PC-9 (cell line): ENCODE measurements at regions of chr11 and their contacts with region 1.

Region 1: GRCh38 chr11:122853971-122854446 is 15.7 kb downstream of the CRTAM start:
- DNase-seq: peak; percentile 45 to 69
- H3K4me3 ChIP-seq: no peak overlapping the region
- H3K27ac ChIP-seq: peak overlapping the region; percentile 100
- H3K4me1 ChIP-seq: peaks cover 57% of the 10 kb centered on the region
- H3K27me3 ChIP-seq: no peaks in the 10 kb centered on the region
- CTCF ChIP-seq: peak; percentile 90

Region 2: GRCh38 chr11:121591405-121592033 is 1262.5 kb before region 1 on chr11:
- CTCF ChIA-PET with region 1: no interaction called
- POLR2A ChIA-PET with region 1: no interaction called
- intact Hi-C with region 1: loop called (anchors 5 kb)
- DNase-seq: peak in 1 of 2 experiments; percentile 61
- H3K4me3 ChIP-seq: no peak overlapping the region
- H3K27ac ChIP-seq: no peak overlapping the region
- H3K4me1 ChIP-seq: peaks cover 9% of the 10 kb centered on the region
- H3K27me3 ChIP-seq: peaks cover 42% of the 10 kb centered on the region; the same call in 1 of the 2 replicates
- CTCF ChIP-seq: peak; percentile 93

Region 3: DNA sequence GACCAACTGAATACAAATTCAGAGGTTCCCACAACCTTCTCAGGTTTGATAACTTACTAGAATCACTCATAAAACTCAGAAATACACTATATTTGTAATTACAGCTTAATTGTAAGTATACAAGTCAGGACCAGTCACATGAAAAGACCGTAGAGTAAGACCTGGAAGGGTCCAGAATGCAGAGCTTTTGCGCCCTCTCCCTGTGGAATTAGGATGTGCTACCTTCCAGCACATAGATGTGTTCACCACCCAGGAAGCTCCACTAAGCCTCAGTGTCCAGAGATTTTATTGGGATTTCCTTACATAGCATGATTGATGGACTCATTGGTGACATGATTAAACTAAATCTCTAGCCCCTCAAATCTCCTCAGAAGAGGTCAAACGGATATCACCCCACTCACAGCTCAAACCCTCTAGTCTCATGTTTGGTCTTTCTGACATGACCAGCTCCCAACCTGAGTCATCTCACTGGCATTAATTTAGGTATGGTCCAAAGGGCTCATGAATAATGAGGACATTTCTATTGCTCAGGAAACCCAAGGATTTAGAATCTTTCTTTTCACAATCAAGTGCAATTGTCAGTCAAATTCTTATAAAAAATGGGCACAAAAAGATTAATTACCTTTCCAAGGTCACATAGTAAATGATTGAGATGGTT is 275.7 kb before region 1 on chr11:
- CTCF ChIA-PET with region 1: interaction called, 4 read pairs
- POLR2A ChIA-PET with region 1: no interaction called
- intact Hi-C with region 1: loop called (anchors 1 kb)
- DNase-seq: no peak
- H3K4me3 ChIP-seq: no peak overlapping the region
- H3K27ac ChIP-seq: no peak overlapping the region
- H3K4me1 ChIP-seq: peaks cover 11% of the 10 kb centered on the region
- H3K27me3 ChIP-seq: no peaks in the 10 kb centered on the region
- CTCF ChIP-seq: no peak

Region 4: GRCh38 chr11:122781378-122782195 is 72.4 kb before region 1 on chr11:
- CTCF ChIA-PET with region 1: interaction called, 3 read pairs
- POLR2A ChIA-PET with region 1: no interaction called
- intact Hi-C with region 1: loop called (anchors 1 kb)
- DNase-seq: peak; percentile 62 to 82
- H3K4me3 ChIP-seq: no peak overlapping the region
- H3K27ac ChIP-seq: no peak overlapping the region
- H3K4me1 ChIP-seq: peaks cover 62% of the 10 kb centered on the region
- H3K27me3 ChIP-seq: no peaks in the 10 kb centered on the region
- CTCF ChIP-seq: peak; percentile 95

Region 5: GRCh38 chr11:122814401-122814800 is 39.6 kb before region 1 on chr11:
- CTCF ChIA-PET with region 1: interaction called, 7 read pairs
- POLR2A ChIA-PET with region 1: no interaction called
- intact Hi-C with region 1: loop called (anchors 2 kb)
- DNase-seq: no peak
- H3K4me3 ChIP-seq: no peak overlapping the region
- H3K27ac ChIP-seq: peak overlapping the region; percentile 97
- H3K4me1 ChIP-seq: peaks cover 38% of the 10 kb centered on the region
- H3K27me3 ChIP-seq: no peaks in the 10 kb centered on the region
- CTCF ChIP-seq: peak; percentile 36; the same call in 1 of the 2 replicates

Region 6: GRCh38 chr11:123083623-123084029 is 229.6 kb after region 1 on chr11:
- CTCF ChIA-PET with region 1: interaction called, 13 read pairs
- POLR2A ChIA-PET with region 1: interaction called, 5 read pairs
- intact Hi-C with region 1: no loop called
- DNase-seq: peak; percentile 90 to 95
- H3K4me3 ChIP-seq: no peak overlapping the region
- H3K27ac ChIP-seq: peak overlapping the region; percentile 38
- H3K4me1 ChIP-seq: peaks cover 22% of the 10 kb centered on the region
- H3K27me3 ChIP-seq: no peaks in the 10 kb centered on the region
- CTCF ChIP-seq: no peak